Lower leg skin (tissue), 4 donors: ENCODE measurements at regions of chr1 and their contacts with region 1.

Region 1: GRCh38 chr1:6695868-6696267 is 5.7 kb downstream of the DNAJC11 start:
- DNase-seq: no peak
- H3K4me3 ChIP-seq: no peak overlapping the region
- CTCF ChIP-seq: no peak
- POLR2A ChIP-seq: no peak

Region 2: GRCh38 chr1:5147806-5148205 is 1548.1 kb before region 1 on chr1:
- intact Hi-C with region 1: loop called (anchors 5 kb)
- DNase-seq: no peak
- H3K4me3 ChIP-seq: no peak overlapping the region
- CTCF ChIP-seq: no peak
- POLR2A ChIP-seq: no peak

Region 3: DNA sequence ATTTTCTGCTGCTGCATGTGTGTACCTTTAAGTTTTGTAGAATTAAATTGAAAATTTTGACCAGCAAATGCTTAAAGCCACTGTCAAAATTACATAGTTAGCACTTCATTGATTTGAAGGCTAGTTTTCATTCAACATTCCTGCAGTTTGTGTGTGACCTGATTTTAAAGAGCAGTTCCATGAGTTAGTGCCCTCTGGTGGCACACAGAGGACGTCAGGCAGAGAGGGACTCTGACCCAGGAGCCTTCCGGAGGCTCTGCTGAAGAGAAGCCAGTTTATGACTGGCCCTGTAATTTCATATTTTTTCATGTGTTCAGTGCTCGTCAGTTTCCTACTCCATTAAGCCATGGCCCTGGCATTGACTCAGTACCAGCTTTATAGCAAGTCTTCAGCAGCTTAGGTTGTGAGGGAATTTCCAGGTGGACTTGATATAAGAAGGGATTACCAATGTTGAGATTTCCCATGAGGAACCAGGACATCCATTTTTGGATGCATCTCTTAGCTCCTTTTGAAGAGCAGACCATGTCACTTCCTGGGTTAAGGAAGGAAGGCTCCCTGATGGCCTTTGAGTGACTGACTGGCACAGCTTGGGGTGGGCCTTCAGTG is 194.1 kb after region 1 on chr1:
- intact Hi-C with region 1: no loop called
- DNase-seq: peak in 1 of 2 donors; percentile 39
- H3K4me3 ChIP-seq: no peak overlapping the region
- CTCF ChIP-seq: no peak
- POLR2A ChIP-seq: no peak